ENCODE measurements at regions of chr14 and their contacts with region 1.

Region 1: DNA sequence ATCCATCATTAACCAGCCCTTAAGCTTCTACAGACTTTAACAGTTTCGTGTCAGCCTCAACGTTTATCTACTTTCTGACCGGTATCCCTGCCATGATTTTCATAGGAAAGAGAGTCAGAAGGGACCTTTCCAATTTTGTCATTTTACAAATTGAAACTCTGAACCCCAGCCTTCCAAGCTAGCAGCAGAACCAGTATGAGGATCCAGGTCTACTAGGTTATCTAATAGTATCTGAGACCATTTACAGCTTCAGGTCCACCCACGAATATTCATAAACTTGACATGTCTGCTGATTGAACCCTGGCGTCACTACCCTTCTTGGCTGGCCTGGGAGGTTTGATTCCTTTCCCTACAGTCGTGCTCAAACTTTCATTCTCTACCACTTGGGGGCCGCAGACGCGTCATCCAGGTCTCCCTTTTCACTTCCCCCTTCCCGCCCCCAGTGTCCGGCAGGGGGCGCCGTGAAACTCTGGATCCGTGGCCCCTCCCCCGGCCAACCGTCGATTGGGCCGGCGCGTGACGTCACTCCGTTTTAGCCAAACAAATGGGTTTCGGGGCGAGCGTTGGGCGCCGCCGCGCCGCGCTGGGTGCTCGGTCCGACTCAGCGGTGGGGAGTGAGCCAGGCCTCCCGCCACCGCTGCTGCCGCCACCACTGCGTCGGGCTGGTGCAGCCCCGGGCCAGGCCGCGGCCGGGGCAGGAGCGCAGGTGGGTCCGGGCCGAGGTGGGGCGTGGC is at the start of gene FBXO34:
- DNase-seq: peak; percentile 100
- ATAC-seq: peak; percentile 89
- H3K4me3 ChIP-seq: peak within 1 kb of the TSS; percentile 94
- H3K27ac ChIP-seq: peak within 1 kb of the TSS; percentile 15
- H3K4me1 ChIP-seq: peaks cover 33% of the 10 kb centered on the region
- H3K27me3 ChIP-seq: no peaks in the 10 kb centered on the region
- CTCF ChIP-seq: peak; percentile 100
- total RNA-seq, gene FBXO34: 33.6 and 35.9 TPM in 2 replicates

Region 2: GRCh38 chr14:55301437-55302121 is 30.6 kb after region 1 on chr14:
- CTCF ChIA-PET with region 1: no interaction called
- POLR2A ChIA-PET with region 1: no interaction called
- intact Hi-C with region 1: loop called (anchors 2 kb)
- DNase-seq: peak; percentile 64
- ATAC-seq: peak; percentile 94
- H3K4me3 ChIP-seq: no peak overlapping the region
- H3K27ac ChIP-seq: no peak overlapping the region
- H3K4me1 ChIP-seq: peaks cover 13% of the 10 kb centered on the region; the same call in 1 of the 2 replicates
- H3K27me3 ChIP-seq: no peaks in the 10 kb centered on the region
- CTCF ChIP-seq: no peak

Region 3: GRCh38 chr14:55366271-55366670 is 95.3 kb after region 1 on chr14:
- CTCF ChIA-PET with region 1: interaction called, 6 read pairs
- POLR2A ChIA-PET with region 1: no interaction called
- intact Hi-C with region 1: loop called (anchors 1 kb)
- DNase-seq: peak; percentile 96
- ATAC-seq: peak; percentile 97
- H3K4me3 ChIP-seq: peak overlapping the region; percentile 5; the same call in 1 of the 2 replicates
- H3K27ac ChIP-seq: peak overlapping the region; percentile 81
- H3K4me1 ChIP-seq: peaks cover 25% of the 10 kb centered on the region
- H3K27me3 ChIP-seq: no peaks in the 10 kb centered on the region
- CTCF ChIP-seq: no peak

Region 4: DNA sequence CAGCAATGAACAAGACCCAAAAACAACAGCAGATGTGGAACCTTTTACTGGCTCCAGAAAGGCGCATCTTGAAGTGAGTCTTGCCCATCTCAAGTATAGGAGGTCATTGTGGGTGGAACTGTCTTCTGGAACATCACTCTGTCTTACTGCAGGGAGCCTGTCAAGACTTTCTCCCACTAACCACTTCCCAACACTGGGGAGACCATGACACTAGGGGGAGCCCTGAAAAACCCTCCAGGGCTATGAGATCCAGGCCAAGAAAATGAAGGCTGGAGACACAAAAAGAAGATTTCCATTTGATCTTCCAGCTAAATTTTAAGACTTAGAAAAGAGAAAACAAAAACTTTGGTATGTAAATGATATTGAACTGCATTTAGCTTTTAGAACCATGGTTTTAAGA is 154.1 kb after region 1 on chr14:
- CTCF ChIA-PET with region 1: interaction called, 12 read pairs
- POLR2A ChIA-PET with region 1: no interaction called
- intact Hi-C with region 1: loop called (anchors 1 kb)
- DNase-seq: no peak
- ATAC-seq: no peak
- H3K4me3 ChIP-seq: no peak overlapping the region
- H3K27ac ChIP-seq: no peak overlapping the region
- H3K4me1 ChIP-seq: peaks cover 33% of the 10 kb centered on the region
- H3K27me3 ChIP-seq: no peaks in the 10 kb centered on the region
- CTCF ChIP-seq: no peak

Region 5: DNA sequence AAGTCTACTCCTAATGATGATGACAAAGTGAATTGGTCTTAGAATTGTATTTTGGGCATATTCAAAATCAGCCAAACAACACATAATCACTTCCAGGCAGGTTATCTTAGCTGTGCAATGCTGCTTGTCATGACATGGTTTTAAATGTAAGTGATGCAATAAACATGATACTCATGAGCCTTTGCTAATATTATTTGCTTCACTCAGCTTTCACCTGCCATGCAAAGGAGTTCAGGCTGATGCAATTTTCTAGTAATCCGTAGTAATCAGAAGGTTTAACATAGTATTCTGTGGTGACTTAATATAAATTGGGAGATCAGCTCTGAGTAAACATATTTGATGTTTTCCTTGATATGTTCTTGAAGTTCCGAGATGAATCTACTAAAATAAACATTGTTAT is 1337.7 kb after region 1 on chr14:
- CTCF ChIA-PET with region 1: no interaction called
- POLR2A ChIA-PET with region 1: interaction called, 16 read pairs
- intact Hi-C with region 1: no loop called
- DNase-seq: no peak
- ATAC-seq: peak; percentile 73; the same call in 1 of the 2 replicates
- H3K4me3 ChIP-seq: no peak overlapping the region
- H3K27ac ChIP-seq: no peak overlapping the region
- H3K4me1 ChIP-seq: no peaks in the 10 kb centered on the region
- H3K27me3 ChIP-seq: no peaks in the 10 kb centered on the region
- CTCF ChIP-seq: no peak

Measured in PC-3 (cell line).